Psoas muscle (tissue), 8 donors: ENCODE measurements at regions of chr5 and their contacts with region 1.

Region 1: DNA sequence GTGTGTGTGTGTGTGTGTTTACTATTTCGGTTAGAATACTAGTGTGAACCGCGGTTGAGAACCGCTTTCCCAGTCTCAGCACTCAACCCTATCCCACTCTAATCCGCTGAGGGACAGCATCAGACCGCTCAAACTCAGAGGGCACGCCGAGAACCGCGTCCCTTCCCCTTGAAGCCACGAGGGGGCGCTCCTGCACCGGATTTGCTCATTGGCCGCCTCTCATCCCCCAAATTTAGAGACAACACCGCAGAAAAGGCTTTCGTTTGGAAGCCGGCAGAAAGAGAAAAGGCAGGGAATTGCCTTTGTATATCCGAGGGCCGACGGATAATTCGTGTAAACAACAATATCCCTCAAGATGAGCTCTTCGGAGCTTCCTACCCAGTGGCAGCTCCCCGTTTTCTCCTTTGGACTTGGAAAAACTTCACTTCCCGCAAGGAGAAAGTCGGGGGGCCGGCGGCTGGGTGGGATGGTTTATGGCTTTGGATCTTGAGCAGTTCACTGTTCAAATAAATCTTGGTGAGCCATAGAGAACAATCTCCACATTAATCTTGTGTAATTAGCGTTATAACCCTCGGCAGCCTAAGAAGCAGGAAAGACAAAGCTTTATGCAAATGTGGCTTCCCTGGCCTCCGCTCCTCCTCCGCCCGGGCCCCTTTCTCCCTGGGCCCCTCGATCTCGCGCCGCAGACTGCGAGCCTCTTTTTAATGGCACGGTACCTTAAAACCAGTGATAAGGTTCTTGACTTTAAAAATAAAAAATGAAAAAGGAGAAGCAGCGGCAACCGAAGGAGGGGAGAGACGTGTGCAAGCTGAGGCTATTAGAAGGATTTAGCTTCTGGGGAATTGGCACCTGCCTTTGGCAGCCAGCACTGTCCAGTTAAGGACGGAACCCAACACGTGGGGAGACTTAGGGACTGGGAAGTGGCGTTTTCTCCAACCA is 296.8 kb downstream of the PARP8 start:
- DNase-seq: peak; percentile 65 to 70
- ATAC-seq: peak; percentile 49 to 83 (median 59)
- H3K4me3 ChIP-seq: peak overlapping the region; percentile 58
- H3K27ac ChIP-seq: no peak overlapping the region
- H3K4me1 ChIP-seq: no peaks in the 10 kb centered on the region
- H3K27me3 ChIP-seq: peaks cover 3 to 56% (median 13%) of the 10 kb centered on the region in 3 donors
- CTCF ChIP-seq: peak; percentile 71

Region 2: DNA sequence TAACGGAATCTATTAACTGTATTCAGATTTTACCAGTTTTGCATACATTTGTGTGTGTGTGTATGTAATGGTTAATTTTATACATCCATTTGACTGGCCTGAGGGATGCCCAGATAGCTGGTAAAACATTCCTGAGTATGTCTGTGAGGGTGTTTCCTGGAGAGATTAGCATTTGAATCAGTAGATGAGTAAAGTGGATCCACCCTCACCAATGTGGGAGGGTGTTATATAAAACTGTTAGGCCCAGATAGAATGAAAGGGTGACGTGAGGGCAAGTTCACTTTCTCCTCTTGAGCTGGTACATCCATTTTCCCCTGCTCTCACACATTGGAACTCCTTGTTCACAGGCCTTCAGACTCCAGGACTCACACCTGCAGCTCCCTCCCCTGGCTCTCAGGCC is 610.8 kb before region 1 on chr5:
- intact Hi-C with region 1: no loop called
- DNase-seq: no peak
- ATAC-seq: no peak
- H3K4me3 ChIP-seq: no peak overlapping the region
- H3K27ac ChIP-seq: no peak overlapping the region
- H3K4me1 ChIP-seq: no peaks in the 10 kb centered on the region
- H3K27me3 ChIP-seq: no peaks in the 10 kb centered on the region
- CTCF ChIP-seq: no peak

Region 3: GRCh38 chr5:51382763-51383490 is 419.7 kb after region 1 on chr5 and contains the start of gene ISL1:
- intact Hi-C with region 1: loop called in 1 of 2 experiments (anchors 5 kb)
- DNase-seq: peak; percentile 67 to 74
- ATAC-seq: peak; percentile 70 to 94 (median 86)
- H3K4me3 ChIP-seq: peak within 1 kb of the TSS; percentile 59
- H3K27ac ChIP-seq: peak within 1 kb of the TSS; percentile 41
- H3K4me1 ChIP-seq: peaks cover 3% of the 10 kb centered on the region
- H3K27me3 ChIP-seq: peaks cover 7 to 87% (median 26%) of the 10 kb centered on the region in 3 donors
- CTCF ChIP-seq: no peak
- total RNA-seq, gene ISL1: not detected

Region 4: GRCh38 chr5:52007230-52007858 is 1044.1 kb after region 1 on chr5:
- intact Hi-C with region 1: loop called in 1 of 2 experiments (anchors 10 kb)
- DNase-seq: no peak
- ATAC-seq: no peak
- H3K4me3 ChIP-seq: no peak overlapping the region
- H3K27ac ChIP-seq: no peak overlapping the region
- H3K4me1 ChIP-seq: no peaks in the 10 kb centered on the region
- H3K27me3 ChIP-seq: no peaks in the 10 kb centered on the region
- CTCF ChIP-seq: peak; percentile 42

Region 5: GRCh38 chr5:52356311-52356918 is 1393.2 kb after region 1 on chr5:
- intact Hi-C with region 1: loop called in 1 of 2 experiments (anchors 10 kb)
- DNase-seq: no peak
- ATAC-seq: no peak
- H3K4me3 ChIP-seq: no peak overlapping the region
- H3K27ac ChIP-seq: no peak overlapping the region
- H3K4me1 ChIP-seq: no peaks in the 10 kb centered on the region
- H3K27me3 ChIP-seq: no peaks in the 10 kb centered on the region
- CTCF ChIP-seq: peak; percentile 30

Region 6: DNA sequence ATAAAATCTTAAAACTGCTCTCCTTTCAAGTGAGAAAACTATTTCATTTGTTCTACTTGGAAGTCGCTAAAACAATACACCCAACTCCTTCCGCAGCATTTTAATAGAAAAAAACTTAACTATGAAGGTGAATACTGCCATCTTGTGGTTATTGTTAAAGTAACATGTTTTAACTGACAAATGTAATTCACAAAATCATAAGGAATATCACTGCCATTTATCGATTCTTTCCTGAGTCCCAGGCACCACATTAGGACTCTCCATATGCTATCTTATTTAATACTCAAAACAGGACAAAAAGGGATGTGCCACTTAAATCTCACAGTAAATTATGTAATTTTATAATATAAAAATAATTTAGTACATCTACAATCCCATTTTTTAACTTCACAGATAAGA is 1694.0 kb after region 1 on chr5:
- intact Hi-C with region 1: loop called (anchors 2 to 5 kb)
- DNase-seq: no peak
- ATAC-seq: no peak
- H3K4me3 ChIP-seq: no peak overlapping the region
- H3K27ac ChIP-seq: no peak overlapping the region
- H3K4me1 ChIP-seq: no peaks in the 10 kb centered on the region
- H3K27me3 ChIP-seq: no peaks in the 10 kb centered on the region
- CTCF ChIP-seq: peak; percentile 66